CD4-positive, alpha-beta T cell (primary cell): ENCODE measurements at regions of chr9 and their contacts with region 1.

Region 1: DNA sequence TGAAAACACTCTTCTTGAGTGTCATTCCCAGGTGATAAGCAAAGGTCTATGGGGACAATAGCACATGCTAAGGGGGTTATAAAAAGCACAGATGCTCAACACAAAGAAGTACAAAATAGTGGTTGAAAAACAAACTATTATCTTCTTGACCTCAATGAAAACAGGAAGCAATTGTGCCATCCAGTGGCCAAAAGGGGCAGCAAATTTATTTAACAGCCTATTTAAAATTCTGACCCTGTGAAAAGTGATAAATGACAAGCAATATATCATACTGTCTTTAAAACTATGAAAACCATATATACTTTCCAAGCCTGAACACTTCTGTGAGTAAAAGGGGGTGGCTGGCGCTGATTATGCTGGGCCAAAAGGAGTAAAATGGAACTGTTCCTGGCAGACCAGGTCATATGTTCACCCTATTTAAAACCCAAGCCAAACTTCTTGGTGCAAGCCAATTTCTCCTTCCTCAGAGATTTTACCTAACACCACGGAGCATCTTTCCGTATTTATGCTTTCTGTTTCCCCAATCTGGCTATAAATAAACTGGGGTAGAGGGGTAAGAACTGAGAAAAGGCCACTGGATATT is 29.7 kb downstream of the TEX10 start:
- DNase-seq: peak in 6 of 14 experiments; percentile 2 to 50 (median 27)
- ATAC-seq: no peak
- H3K4me3 ChIP-seq: no peak overlapping the region
- H3K4me3 Mint-ChIP-seq: no peak overlapping the region
- H3K27ac ChIP-seq: no peak overlapping the region
- H3K27ac Mint-ChIP-seq: no peak overlapping the region
- H3K4me1 ChIP-seq: no peaks in the 10 kb centered on the region
- H3K4me1 Mint-ChIP-seq: peaks cover 34% of the 10 kb centered on the region
- H3K27me3 ChIP-seq: no peaks in the 10 kb centered on the region
- H3K27me3 Mint-ChIP-seq: no peaks in the 10 kb centered on the region
- CTCF ChIP-seq: peak; percentile 36

Region 2: GRCh38 chr9:99162759-99163364 is 1160.2 kb before region 1 on chr9:
- CTCF ChIA-PET with region 1: no interaction called
- POLR2A ChIA-PET with region 1: no interaction called
- intact Hi-C with region 1: loop called in 1 of 2 experiments (anchors 2 kb)
- DNase-seq: peak in 3 of 14 experiments; percentile 43 to 62 (median 61)
- ATAC-seq: peak; percentile 52
- H3K4me3 ChIP-seq: no peak overlapping the region
- H3K4me3 Mint-ChIP-seq: no peak overlapping the region
- H3K27ac ChIP-seq: no peak overlapping the region
- H3K27ac Mint-ChIP-seq: no peak overlapping the region
- H3K4me1 ChIP-seq: peaks cover 3% of the 10 kb centered on the region
- H3K4me1 Mint-ChIP-seq: peaks cover 15% of the 10 kb centered on the region
- H3K27me3 ChIP-seq: no peaks in the 10 kb centered on the region
- H3K27me3 Mint-ChIP-seq: peaks cover 15% of the 10 kb centered on the region
- CTCF ChIP-seq: peak; percentile 66

Region 3: DNA sequence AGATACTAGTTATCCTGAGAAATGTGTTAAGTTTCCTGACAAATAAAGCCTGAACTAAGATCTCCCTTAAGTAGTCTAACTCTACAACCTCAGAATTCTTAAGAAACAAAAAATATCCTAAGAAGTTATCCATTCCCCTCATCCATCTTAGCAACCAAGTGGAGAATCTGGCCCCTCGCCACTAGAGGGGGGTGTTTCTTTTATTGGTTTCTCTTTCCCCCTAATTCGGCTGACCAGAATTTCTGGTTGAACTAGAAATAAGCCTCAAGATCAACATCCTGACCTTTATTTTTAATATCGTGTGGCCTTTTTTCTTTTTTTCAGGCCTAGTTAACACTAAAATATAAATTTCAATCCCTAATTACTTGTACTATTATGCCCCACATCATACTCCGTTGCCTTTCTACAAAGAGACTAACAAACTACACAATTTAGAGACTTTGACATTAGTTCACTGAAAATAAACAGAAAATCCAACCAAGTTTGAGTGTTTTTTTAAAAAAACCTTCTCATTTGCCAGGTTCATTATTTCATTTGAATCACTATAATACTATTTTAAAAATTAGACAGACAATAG is 515.7 kb before region 1 on chr9:
- CTCF ChIA-PET with region 1: no interaction called
- POLR2A ChIA-PET with region 1: no interaction called
- intact Hi-C with region 1: loop called (anchors 5 kb)
- DNase-seq: peak; percentile 53 to 85 (median 59)
- ATAC-seq: peak; percentile 84
- H3K4me3 ChIP-seq: no peak overlapping the region
- H3K4me3 Mint-ChIP-seq: no peak overlapping the region
- H3K27ac ChIP-seq: no peak overlapping the region
- H3K27ac Mint-ChIP-seq: no peak overlapping the region
- H3K4me1 ChIP-seq: no peaks in the 10 kb centered on the region
- H3K4me1 Mint-ChIP-seq: no peaks in the 10 kb centered on the region
- H3K27me3 ChIP-seq: no peaks in the 10 kb centered on the region
- H3K27me3 Mint-ChIP-seq: peaks cover 4% of the 10 kb centered on the region
- CTCF ChIP-seq: peak; percentile 95

Region 4: DNA sequence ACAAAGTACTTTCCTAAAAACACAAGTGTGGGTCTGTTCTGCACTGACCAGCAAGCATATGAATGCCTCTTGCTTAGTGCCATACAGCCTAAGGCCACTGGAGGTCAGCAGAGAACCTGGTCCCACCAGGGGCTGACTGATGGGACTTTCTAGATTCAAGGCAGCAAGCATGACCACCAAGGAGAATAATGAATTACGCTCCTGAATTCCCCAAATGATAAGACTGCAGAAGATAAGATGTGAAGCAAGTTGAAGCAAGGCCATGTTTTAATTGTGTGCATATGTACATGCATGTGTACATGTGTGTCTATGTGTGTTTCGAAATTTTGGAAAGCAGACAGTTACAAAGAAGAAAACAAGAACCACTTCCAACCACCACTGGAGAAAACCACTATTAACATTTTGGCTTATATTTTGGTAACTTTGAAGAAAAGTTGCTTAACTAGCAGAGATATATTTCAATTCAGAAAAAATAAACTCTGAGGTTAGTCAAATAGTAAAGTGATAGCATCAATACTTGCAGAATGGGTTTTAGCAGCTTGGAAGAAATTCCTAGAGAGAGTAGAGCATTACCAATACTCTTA is 294.8 kb before region 1 on chr9:
- CTCF ChIA-PET with region 1: no interaction called
- POLR2A ChIA-PET with region 1: no interaction called
- intact Hi-C with region 1: loop called (anchors 1 to 2 kb)
- DNase-seq: peak; percentile 34 to 77 (median 54)
- ATAC-seq: peak; percentile 92
- H3K4me3 ChIP-seq: no peak overlapping the region
- H3K4me3 Mint-ChIP-seq: no peak overlapping the region
- H3K27ac ChIP-seq: no peak overlapping the region
- H3K27ac Mint-ChIP-seq: no peak overlapping the region
- H3K4me1 ChIP-seq: no peaks in the 10 kb centered on the region
- H3K4me1 Mint-ChIP-seq: peaks cover 5% of the 10 kb centered on the region
- H3K27me3 ChIP-seq: no peaks in the 10 kb centered on the region
- H3K27me3 Mint-ChIP-seq: no peaks in the 10 kb centered on the region
- CTCF ChIP-seq: peak; percentile 87

Region 5: DNA sequence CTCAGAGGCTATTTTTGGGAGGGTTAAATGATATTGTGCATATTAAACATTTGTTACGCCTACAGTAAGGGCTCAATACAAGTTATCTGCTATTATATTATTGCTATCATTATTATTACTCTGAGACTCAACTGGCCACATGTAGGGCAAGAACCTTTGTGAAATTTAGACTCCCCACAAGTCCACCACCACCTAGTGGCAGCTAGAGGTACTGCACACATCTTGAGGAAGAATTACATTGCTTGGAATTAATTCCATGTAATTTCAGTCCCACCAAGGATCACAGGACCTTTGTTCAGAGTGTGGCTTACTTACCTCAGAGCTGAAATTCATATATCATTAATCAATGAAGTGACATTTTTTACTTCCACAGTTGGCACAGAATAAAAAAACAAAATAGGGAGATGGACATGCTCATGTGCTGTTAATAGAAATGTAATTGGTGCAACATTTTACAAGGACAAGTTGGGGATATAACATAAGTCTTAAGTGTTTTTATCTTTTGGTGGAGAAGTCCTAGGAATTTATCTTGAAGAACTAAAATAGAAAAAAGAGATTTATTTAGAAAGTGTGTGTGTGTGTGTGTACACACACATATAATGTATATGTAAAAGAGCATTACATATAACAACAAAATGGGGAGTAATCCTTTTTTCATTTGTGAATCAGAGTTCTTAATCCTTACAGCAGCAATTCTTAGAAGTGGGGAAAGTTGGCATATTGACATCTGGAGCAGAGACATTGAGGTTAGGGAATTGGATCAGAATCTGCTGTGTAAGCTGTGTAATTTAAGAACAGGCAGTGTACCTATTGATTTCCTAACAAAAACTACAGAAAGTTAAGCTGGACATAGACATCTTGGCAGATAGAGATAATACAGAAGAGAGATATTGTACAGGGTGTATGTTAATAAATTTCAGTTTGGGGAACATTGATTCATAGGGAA is 115.1 kb after region 1 on chr9:
- CTCF ChIA-PET with region 1: interaction called, 10 read pairs
- POLR2A ChIA-PET with region 1: no interaction called
- intact Hi-C with region 1: loop called in 1 of 2 experiments (anchors 5 kb)
- DNase-seq: peak; percentile 29 to 81 (median 60)
- ATAC-seq: peak; percentile 55
- H3K4me3 ChIP-seq: no peak overlapping the region
- H3K4me3 Mint-ChIP-seq: no peak overlapping the region
- H3K27ac ChIP-seq: no peak overlapping the region
- H3K27ac Mint-ChIP-seq: no peak overlapping the region
- H3K4me1 ChIP-seq: no peaks in the 10 kb centered on the region
- H3K4me1 Mint-ChIP-seq: no peaks in the 10 kb centered on the region
- H3K27me3 ChIP-seq: no peaks in the 10 kb centered on the region
- H3K27me3 Mint-ChIP-seq: no peaks in the 10 kb centered on the region
- CTCF ChIP-seq: peak; percentile 99